ENCODE measurements at regions of chr2 and their contacts with region 1.

Region 1: DNA sequence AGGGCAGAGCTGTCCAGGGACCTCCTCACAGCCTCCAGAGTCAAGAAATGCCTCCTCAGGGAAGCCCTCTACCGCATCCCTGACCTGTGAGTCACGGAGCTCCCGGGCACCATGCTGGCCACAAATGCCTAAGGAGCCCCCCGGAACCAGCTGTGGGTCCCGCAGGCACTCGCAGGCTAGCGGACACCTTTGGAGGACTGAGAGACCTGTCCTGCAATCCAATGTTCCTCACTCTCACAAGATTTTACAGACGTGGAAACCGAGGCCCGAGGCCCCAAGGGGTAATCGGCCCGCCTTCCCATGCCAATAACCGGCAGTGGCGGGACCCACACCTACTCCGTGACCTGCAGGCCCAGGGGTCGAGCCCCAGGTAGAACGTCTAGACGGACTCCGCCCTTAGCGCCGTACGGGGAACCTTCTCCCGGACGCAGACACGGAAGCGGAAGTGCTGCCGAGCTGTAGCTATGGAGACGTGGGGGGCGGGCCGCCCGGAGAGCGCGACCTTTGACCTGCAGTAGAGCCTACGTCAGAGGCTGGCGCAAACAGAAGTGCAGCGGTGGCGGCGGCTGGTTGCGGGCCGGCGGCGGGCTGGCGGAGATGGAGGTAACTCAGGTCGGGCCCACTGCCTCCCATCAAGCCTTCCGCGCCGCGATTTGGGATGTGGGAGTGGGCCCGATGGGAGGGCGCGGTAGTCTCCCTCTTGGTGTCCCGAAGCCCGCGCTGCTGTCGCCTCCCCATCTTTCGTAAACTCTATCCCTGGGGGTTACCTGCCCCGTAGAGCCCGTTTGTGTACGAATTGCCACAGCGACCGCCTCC is at the start of gene GCC2:
- H3K4me3 Mint-ChIP-seq: peak within 1 kb of the TSS; percentile 89
- H3K27ac Mint-ChIP-seq: peak within 1 kb of the TSS; percentile 88
- H3K4me1 Mint-ChIP-seq: peaks cover 24% of the 10 kb centered on the region
- H3K27me3 Mint-ChIP-seq: no peaks in the 10 kb centered on the region

Region 2: DNA sequence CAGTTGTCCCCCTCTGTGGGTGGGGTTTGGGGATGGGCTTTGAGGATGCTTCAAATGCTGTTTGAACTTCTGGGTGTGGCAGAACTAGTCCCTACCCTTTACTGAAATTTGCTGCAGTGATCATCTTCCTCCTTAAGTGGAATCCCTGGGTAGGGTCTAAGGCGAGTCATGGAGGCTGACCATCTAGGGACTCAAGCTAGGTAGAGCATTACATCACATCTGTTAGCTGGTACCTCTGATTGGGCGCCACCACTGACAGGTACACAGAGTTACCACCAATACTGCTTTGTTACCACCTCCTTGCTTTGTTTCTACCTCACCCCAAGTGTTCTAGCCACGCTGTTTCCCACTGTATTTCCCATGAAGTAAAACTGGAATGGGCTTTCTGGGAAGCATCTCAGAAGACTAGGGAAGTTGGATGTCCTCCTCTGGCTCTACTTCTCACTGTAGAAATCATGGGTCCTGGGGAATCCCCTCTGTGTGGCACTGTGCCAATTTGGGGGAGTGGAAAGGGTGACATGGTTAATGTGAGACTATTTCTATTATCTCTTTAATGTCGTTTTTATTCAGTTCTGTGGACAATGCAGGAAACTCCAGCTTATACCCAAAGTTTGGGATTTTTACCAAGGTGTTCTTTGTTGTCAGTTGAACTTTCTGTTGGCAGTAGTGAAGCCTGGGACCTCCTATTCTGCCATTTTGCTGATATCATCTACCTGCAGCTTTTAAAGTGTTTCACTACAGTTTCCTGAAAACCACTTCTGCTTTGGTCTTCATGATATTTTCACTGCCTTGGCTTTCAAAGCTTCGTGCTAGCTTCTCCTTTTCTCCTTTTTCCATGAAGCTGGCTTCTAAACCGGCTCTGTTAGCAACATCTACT is 85.6 kb before region 1 on chr2:
- intact Hi-C with region 1: loop called (anchors 5 kb)
- H3K4me3 Mint-ChIP-seq: peak overlapping the region; percentile 0
- H3K27ac Mint-ChIP-seq: peak overlapping the region; percentile 68
- H3K4me1 Mint-ChIP-seq: peaks cover 24% of the 10 kb centered on the region
- H3K27me3 Mint-ChIP-seq: no peaks in the 10 kb centered on the region

Region 3: DNA sequence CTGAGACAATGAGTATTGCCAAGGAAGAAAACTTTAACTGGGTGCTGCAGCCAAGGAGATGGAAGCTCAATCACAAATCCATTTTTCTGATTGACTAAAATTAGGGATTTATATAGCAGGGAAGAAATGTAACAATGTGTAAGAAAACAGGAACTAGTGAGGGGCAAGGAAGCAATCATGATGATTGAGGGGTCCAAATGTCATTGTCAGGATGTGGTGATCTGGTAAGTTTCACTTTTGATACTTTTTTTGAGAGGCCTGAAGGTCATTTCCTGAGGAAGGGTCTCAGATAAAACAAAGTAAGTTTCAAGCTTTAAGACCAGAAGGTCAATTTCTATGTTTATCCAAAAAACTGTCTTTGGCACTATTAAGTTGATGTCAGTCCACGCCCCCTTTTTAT is 11.9 kb before region 1 on chr2:
- intact Hi-C with region 1: no loop called
- H3K4me3 Mint-ChIP-seq: no peak overlapping the region
- H3K27ac Mint-ChIP-seq: no peak overlapping the region
- H3K4me1 Mint-ChIP-seq: peaks cover 9% of the 10 kb centered on the region
- H3K27me3 Mint-ChIP-seq: peaks cover 3% of the 10 kb centered on the region

Region 4: GRCh38 chr2:108533832-108534583 is 85.1 kb after region 1 on chr2 and contains the start of gene LIMS1:
- intact Hi-C with region 1: loop called (anchors 1 kb)
- H3K4me3 Mint-ChIP-seq: peak within 1 kb of the TSS; percentile 87
- H3K27ac Mint-ChIP-seq: peak within 1 kb of the TSS; percentile 92
- H3K4me1 Mint-ChIP-seq: peaks cover 45% of the 10 kb centered on the region
- H3K27me3 Mint-ChIP-seq: no peaks in the 10 kb centered on the region

Region 5: DNA sequence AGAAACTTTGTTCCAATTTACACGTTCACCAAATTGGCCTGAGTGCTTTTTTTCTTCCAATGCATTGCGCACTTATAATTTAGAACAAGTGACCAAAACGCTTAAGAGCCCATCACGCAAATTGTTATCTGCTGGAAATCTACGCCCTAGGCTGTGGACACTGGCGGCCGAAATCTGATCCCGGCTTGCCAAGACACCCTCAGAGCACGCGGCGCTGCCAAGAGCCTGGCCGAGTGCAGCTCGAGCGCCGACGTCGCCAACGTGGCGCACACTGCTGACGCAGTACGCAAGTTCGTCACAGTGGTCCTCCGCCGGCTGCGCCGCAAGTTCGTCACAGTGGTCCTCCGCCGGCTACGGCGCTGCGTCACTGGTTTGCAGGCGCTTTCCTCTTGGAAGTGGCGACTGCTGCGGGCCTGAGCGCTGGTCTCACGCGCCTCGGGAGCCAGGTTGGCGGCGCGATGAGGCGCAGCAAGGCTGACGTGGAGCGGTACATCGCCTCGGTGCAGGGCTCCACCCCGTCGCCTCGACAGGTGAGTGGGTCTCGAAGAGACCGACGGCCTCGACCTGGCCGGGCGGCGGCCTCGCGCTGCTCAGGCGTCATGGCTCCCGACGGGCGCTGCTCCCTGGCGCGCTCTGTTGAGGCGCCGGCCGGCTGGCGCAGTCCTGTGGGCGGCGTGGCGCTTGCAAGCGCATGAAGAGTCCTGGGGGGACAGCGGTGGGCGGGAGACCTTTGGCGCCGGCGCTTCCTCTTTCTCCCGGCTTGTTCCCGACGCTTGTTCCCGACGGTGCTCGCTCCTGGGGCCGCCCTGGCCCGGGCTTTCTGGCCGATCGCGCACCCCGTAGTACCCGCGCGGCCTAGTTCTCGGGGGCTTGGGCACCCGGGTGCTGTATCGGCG is 270.5 kb after region 1 on chr2 and contains the start of gene RANBP2:
- intact Hi-C with region 1: loop called (anchors 1 kb)
- H3K4me3 Mint-ChIP-seq: peak within 1 kb of the TSS; percentile 84
- H3K27ac Mint-ChIP-seq: peak within 1 kb of the TSS; percentile 98
- H3K4me1 Mint-ChIP-seq: peaks cover 29% of the 10 kb centered on the region
- H3K27me3 Mint-ChIP-seq: no peaks in the 10 kb centered on the region

Region 6: GRCh38 chr2:109238580-109238979 is 789.7 kb after region 1 on chr2:
- intact Hi-C with region 1: no loop called
- H3K4me3 Mint-ChIP-seq: no peak overlapping the region
- H3K27ac Mint-ChIP-seq: no peak overlapping the region
- H3K4me1 Mint-ChIP-seq: peaks cover 56% of the 10 kb centered on the region
- H3K27me3 Mint-ChIP-seq: no peaks in the 10 kb centered on the region

Measured in dendritic cell treated with granulocyte-macrophage colony-stimulating factor and Interleukin-4, amounts not matched to agents 40 ng/mL and 50 ng/mL, for 4 days (primary cell).